H1 (cell line): ENCODE measurements at regions of chr3 and their contacts with region 1.

Region 1: GRCh38 chr3:72587282-72587681 is 261.0 kb downstream of the SHQ1 start:
- DNase-seq: no peak
- H3K4me3 ChIP-seq: no peak overlapping the region
- H3K27ac ChIP-seq: no peak overlapping the region
- H3K4me1 ChIP-seq: peaks cover 7 to 19% (median 14%) of the 10 kb centered on the region in 4 experiments
- H3K27me3 ChIP-seq: peaks cover 0 to 11% (median 9%) of the 10 kb centered on the region in 4 experiments; a peak in 4 of 7 replicates
- CTCF ChIP-seq: peak; percentile 44 to 54 (median 52)
- EP300 ChIP-seq: no peak
- POLR2A ChIP-seq: no peak
- RAD21 ChIP-seq: peak; percentile 38 to 58; a peak in 3 of 4 replicates

Region 2: GRCh38 chr3:72473156-72473555 is 114.1 kb before region 1 on chr3:
- CTCF ChIA-PET with region 1: no interaction called
- POLR2A ChIA-PET with region 1: no interaction called
- DNase-seq: no peak
- H3K4me3 ChIP-seq: no peak overlapping the region
- H3K27ac ChIP-seq: no peak overlapping the region
- H3K4me1 ChIP-seq: peaks cover 0 to 3% (median 0%) of the 10 kb centered on the region in 4 experiments; a peak in 1 of 7 replicates
- H3K27me3 ChIP-seq: no peaks in the 10 kb centered on the region
- CTCF ChIP-seq: no peak
- EP300 ChIP-seq: no peak
- POLR2A ChIP-seq: no peak
- RAD21 ChIP-seq: no peak

Region 3: DNA sequence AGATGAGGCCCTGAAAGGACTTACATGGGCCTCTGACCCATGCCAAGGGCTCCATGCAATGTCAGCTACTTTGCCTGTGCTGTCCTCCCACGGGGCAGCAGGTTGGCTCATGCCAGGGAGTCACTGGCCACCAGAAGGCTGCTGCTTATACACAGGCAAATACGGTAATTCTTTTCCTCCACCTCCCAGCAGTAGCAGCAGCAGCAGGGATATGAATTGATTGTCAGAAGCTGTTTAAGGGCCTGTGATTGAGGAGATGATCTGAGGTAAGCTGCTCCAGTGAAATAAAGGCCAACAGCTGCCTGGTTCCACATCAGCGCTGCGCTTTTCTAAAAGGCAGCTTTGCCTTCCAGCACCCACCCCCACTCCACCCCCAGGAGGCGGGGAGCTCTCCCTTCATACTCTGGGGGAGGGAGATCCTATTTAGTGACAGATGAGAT is 10.5 kb after region 1 on chr3:
- CTCF ChIA-PET with region 1: interaction called, 18 read pairs
- POLR2A ChIA-PET with region 1: no interaction called
- DNase-seq: no peak
- H3K4me3 ChIP-seq: no peak overlapping the region
- H3K27ac ChIP-seq: no peak overlapping the region
- H3K4me1 ChIP-seq: peaks cover 0 to 8% (median 4%) of the 10 kb centered on the region in 4 experiments; a peak in 5 of 7 replicates
- H3K27me3 ChIP-seq: no peaks in the 10 kb centered on the region
- CTCF ChIP-seq: no peak
- EP300 ChIP-seq: no peak
- POLR2A ChIP-seq: no peak
- RAD21 ChIP-seq: peak in 1 of 2 experiments; percentile 18; a peak in 2 of 4 replicates